Calu3 (cell line): ENCODE measurements at regions of chr15 and their contacts with region 1.

Region 1: GRCh38 chr15:49046220-49047102 is at the start of gene SECISBP2L:
- DNase-seq: peak; percentile 94
- H3K4me3 Mint-ChIP-seq: peak within 1 kb of the TSS; percentile 94
- H3K27ac Mint-ChIP-seq: peak within 1 kb of the TSS; percentile 89
- H3K4me1 Mint-ChIP-seq: no peaks in the 10 kb centered on the region
- H3K27me3 Mint-ChIP-seq: no peaks in the 10 kb centered on the region
- CTCF ChIP-seq: no peak
- total RNA-seq, gene SECISBP2L: 32.6 and 37.0 TPM in 2 replicates

Region 2: DNA sequence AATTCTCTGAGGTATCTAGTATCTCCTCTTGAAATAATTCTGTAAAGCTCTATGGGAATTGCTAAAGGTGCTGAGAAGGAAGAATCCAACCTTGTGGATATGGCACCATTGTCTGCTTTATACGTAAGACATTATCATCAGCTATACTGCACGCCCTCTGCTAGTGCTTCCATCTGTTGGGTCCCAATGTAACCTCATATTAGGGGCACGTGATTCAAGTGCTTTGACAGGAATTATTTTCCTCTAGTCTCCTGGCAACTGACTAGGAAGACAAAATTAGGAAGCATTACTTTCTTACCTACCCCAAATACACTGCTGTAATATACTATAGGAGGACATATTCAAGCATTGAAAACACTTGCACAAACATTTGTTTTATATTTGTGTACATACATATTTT is 84.9 kb after region 1 on chr15:
- CTCF ChIA-PET with region 1: no interaction called
- intact Hi-C with region 1: no loop called
- DNase-seq: no peak
- H3K4me3 Mint-ChIP-seq: no peak overlapping the region
- H3K27ac Mint-ChIP-seq: no peak overlapping the region
- H3K4me1 Mint-ChIP-seq: peaks cover 15% of the 10 kb centered on the region
- H3K27me3 Mint-ChIP-seq: no peaks in the 10 kb centered on the region
- CTCF ChIP-seq: no peak

Region 3: GRCh38 chr15:49145651-49146609 is 99.5 kb after region 1 on chr15:
- CTCF ChIA-PET with region 1: interaction called, 3 read pairs
- intact Hi-C with region 1: loop called (anchors 5 kb)
- DNase-seq: peak; percentile 60
- H3K4me3 Mint-ChIP-seq: peak overlapping the region; percentile 23
- H3K27ac Mint-ChIP-seq: peak overlapping the region; percentile 43
- H3K4me1 Mint-ChIP-seq: peaks cover 29% of the 10 kb centered on the region
- H3K27me3 Mint-ChIP-seq: no peaks in the 10 kb centered on the region
- CTCF ChIP-seq: peak; percentile 40

Region 4: GRCh38 chr15:49215768-49216739 is 169.6 kb after region 1 on chr15:
- CTCF ChIA-PET with region 1: no interaction called
- intact Hi-C with region 1: loop called (anchors 10 kb)
- DNase-seq: peak; percentile 68
- H3K4me3 Mint-ChIP-seq: no peak overlapping the region
- H3K27ac Mint-ChIP-seq: peak overlapping the region; percentile 36
- H3K4me1 Mint-ChIP-seq: peaks cover 21% of the 10 kb centered on the region
- H3K27me3 Mint-ChIP-seq: no peaks in the 10 kb centered on the region
- CTCF ChIP-seq: no peak

Region 5: DNA sequence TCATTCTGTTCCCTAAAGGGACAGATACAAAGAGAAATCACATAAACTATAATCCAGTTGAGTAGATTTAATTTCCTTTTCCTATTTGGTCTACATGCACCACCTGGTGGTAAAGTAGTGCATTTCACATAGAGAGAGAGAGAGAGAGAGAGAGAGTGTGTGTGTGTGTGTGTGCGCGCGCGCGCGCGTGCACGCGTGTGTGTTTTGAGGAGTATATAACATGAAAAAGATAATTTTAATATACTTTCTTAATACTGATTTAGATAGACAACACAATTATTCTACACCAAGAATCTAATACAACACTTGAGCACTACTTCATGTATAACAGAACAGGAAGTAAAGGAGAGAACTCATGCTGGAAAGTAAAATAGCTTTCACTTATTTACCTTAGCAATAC is 375.5 kb after region 1 on chr15:
- CTCF ChIA-PET with region 1: no interaction called
- intact Hi-C with region 1: loop called (anchors 10 kb)
- DNase-seq: peak; percentile 55
- H3K4me3 Mint-ChIP-seq: peak overlapping the region; percentile 22
- H3K27ac Mint-ChIP-seq: peak overlapping the region; percentile 7
- H3K4me1 Mint-ChIP-seq: no peaks in the 10 kb centered on the region
- H3K27me3 Mint-ChIP-seq: no peaks in the 10 kb centered on the region
- CTCF ChIP-seq: peak; percentile 67